T-cell (primary cell): ENCODE measurements at regions of chr14 and their contacts with region 1.

Region 1: GRCh38 chr14:102819176-102819628 is 42.0 kb downstream of the TRAF3 start:
- DNase-seq: peak in 31 of 35 experiments; percentile 10 to 65 (median 29)
- ATAC-seq: peak; percentile 55 to 85 (median 73)
- H3K4me3 ChIP-seq: peak overlapping the region in 1 of 2 donors; percentile 13
- H3K4me3 Mint-ChIP-seq: peak overlapping the region; percentile 59 to 72 (median 66)
- H3K27ac ChIP-seq: peak overlapping the region; percentile 36
- H3K27ac Mint-ChIP-seq: peak overlapping the region; percentile 79 to 86
- H3K4me1 ChIP-seq: peaks cover 2 to 34% of the 10 kb centered on the region in 2 experiments
- H3K4me1 Mint-ChIP-seq: peaks cover 82 to 87% (median 85%) of the 10 kb centered on the region in 3 donors
- H3K27me3 ChIP-seq: no peaks in the 10 kb centered on the region
- H3K27me3 Mint-ChIP-seq: no peaks in the 10 kb centered on the region

Region 2: DNA sequence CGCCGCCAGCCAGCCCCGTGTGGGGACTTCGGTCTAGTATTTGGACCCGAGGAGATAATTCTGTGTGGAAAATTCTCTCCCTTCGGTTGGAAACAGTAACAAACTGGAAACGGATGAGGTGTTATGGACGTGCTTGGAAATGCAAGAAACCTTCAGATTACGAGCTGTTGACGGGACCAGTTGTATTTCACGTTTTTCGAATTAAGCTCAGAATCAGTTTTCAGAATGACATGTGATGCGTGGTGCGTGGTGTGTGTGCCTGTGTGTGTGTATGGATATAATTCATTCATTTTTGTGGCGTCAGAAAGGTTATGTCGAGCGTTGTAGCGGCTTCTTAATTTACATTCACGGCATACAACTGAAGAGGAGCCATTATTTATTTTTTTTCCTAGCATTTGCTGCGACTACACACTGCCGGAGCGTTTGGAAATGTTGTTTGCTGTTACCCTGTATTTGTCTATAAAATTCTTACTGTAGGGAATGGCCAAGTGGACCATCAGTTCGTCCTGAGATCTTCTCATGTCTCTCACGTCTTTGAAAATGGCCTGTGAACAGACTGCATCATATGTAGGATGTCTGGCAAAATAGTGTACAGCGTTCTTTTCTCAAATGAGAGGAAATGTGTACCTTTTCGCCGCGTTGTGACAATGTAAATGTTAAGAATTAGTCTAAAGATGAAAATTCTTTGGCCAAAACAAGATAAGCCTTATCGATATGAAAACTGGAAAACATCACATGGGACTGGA is 40.7 kb before region 1 on chr14:
- CTCF ChIA-PET with region 1: no interaction called
- POLR2A ChIA-PET with region 1: interaction called in 1 of 2 experiments, 10 read pairs
- DNase-seq: peak in 19 of 35 experiments; percentile 2 to 63 (median 17)
- ATAC-seq: no peak
- H3K4me3 ChIP-seq: peak overlapping the region; percentile 57 to 91
- H3K4me3 Mint-ChIP-seq: peak overlapping the region; percentile 76 to 97 (median 86)
- H3K27ac ChIP-seq: peak overlapping the region; percentile 61
- H3K27ac Mint-ChIP-seq: peak overlapping the region; percentile 73 to 76
- H3K4me1 ChIP-seq: peaks cover 30 to 65% of the 10 kb centered on the region in 2 experiments
- H3K4me1 Mint-ChIP-seq: peaks cover 50 to 69% (median 64%) of the 10 kb centered on the region in 3 donors
- H3K27me3 ChIP-seq: no peaks in the 10 kb centered on the region
- H3K27me3 Mint-ChIP-seq: no peaks in the 10 kb centered on the region

Region 3: DNA sequence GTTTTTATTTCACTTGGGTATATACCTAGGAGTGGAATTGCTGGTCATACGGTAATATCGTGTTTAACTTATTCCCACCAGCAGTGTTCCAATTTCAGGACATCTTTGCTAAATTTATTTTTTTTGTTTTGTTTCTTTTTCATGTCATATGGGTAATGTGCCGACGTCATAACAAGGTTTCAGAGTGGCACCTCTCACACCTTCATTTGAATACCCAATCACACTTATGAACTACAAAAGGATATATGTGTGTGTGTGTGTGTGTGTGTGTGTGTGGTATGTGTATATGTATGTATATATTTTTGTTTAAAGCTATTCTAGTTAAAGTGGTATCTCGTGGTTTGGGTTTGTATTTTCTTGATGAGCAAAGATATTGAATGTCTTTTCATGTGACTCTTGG is 29.9 kb before region 1 on chr14:
- CTCF ChIA-PET with region 1: no interaction called
- POLR2A ChIA-PET with region 1: no interaction called
- DNase-seq: peak in 1 of 35 experiments; percentile 37
- ATAC-seq: peak in 1 of 4 experiments; percentile 36
- H3K4me3 ChIP-seq: no peak overlapping the region
- H3K4me3 Mint-ChIP-seq: no peak overlapping the region
- H3K27ac ChIP-seq: no peak overlapping the region
- H3K27ac Mint-ChIP-seq: no peak overlapping the region
- H3K4me1 ChIP-seq: peaks cover 0 to 49% of the 10 kb centered on the region in 2 experiments
- H3K4me1 Mint-ChIP-seq: peaks cover 75 to 82% (median 78%) of the 10 kb centered on the region in 3 donors
- H3K27me3 ChIP-seq: no peaks in the 10 kb centered on the region
- H3K27me3 Mint-ChIP-seq: no peaks in the 10 kb centered on the region